Naive thymus-derived CD4-positive, alpha-beta T cell (primary cell): ENCODE measurements at regions of chr2 and their contacts with region 1.

Region 1: GRCh38 chr2:198438331-198438730 is 633.9 kb downstream of the PLCL1 start:
- DNase-seq: no peak
- ATAC-seq: no peak
- H3K4me3 ChIP-seq: no peak overlapping the region
- H3K4me3 Mint-ChIP-seq: no peak overlapping the region
- H3K27ac ChIP-seq: no peak overlapping the region
- H3K27ac Mint-ChIP-seq: no peak overlapping the region
- H3K4me1 ChIP-seq: no peaks in the 10 kb centered on the region
- H3K4me1 Mint-ChIP-seq: peaks cover 0 to 2% (median 0%) of the 10 kb centered on the region in 7 donors
- H3K27me3 ChIP-seq: peaks cover 0 to 6% of the 10 kb centered on the region in 2 donors
- H3K27me3 Mint-ChIP-seq: peaks cover 2 to 30% (median 11%) of the 10 kb centered on the region in 5 donors

Region 2: GRCh38 chr2:197255543-197255942 is 1182.8 kb before region 1 on chr2:
- CTCF ChIA-PET with region 1: no interaction called
- POLR2A ChIA-PET with region 1: no interaction called
- intact Hi-C with region 1: no loop called
- DNase-seq: peak in 7 of 9 donors; percentile 47 to 83 (median 56)
- ATAC-seq: peak; percentile 96
- H3K4me3 ChIP-seq: peak overlapping the region; percentile 38
- H3K4me3 Mint-ChIP-seq: peak overlapping the region; percentile 69 to 88 (median 77)
- H3K27ac ChIP-seq: peak overlapping the region; percentile 80
- H3K27ac Mint-ChIP-seq: peak overlapping the region; percentile 84 to 98 (median 94)
- H3K4me1 ChIP-seq: peaks cover 68 to 74% of the 10 kb centered on the region in 2 donors
- H3K4me1 Mint-ChIP-seq: peaks cover 58 to 98% (median 82%) of the 10 kb centered on the region in 7 donors
- H3K27me3 ChIP-seq: no peaks in the 10 kb centered on the region
- H3K27me3 Mint-ChIP-seq: no peaks in the 10 kb centered on the region

Region 3: GRCh38 chr2:198478361-198478760 is 40.0 kb after region 1 on chr2:
- CTCF ChIA-PET with region 1: no interaction called
- POLR2A ChIA-PET with region 1: no interaction called
- intact Hi-C with region 1: loop called in 1 of 2 experiments (anchors 1 kb)
- DNase-seq: no peak
- ATAC-seq: no peak
- H3K4me3 ChIP-seq: no peak overlapping the region
- H3K4me3 Mint-ChIP-seq: no peak overlapping the region
- H3K27ac ChIP-seq: no peak overlapping the region
- H3K27ac Mint-ChIP-seq: no peak overlapping the region
- H3K4me1 ChIP-seq: no peaks in the 10 kb centered on the region
- H3K4me1 Mint-ChIP-seq: no peaks in the 10 kb centered on the region
- H3K27me3 ChIP-seq: no peaks in the 10 kb centered on the region
- H3K27me3 Mint-ChIP-seq: peaks cover 0 to 10% (median 0%) of the 10 kb centered on the region in 5 donors

Region 4: GRCh38 chr2:198731842-198732399 is 293.6 kb after region 1 on chr2:
- CTCF ChIA-PET with region 1: no interaction called
- POLR2A ChIA-PET with region 1: no interaction called
- intact Hi-C with region 1: no loop called
- DNase-seq: no peak
- ATAC-seq: no peak
- H3K4me3 ChIP-seq: no peak overlapping the region
- H3K4me3 Mint-ChIP-seq: no peak overlapping the region
- H3K27ac ChIP-seq: no peak overlapping the region
- H3K27ac Mint-ChIP-seq: no peak overlapping the region
- H3K4me1 ChIP-seq: no peaks in the 10 kb centered on the region
- H3K4me1 Mint-ChIP-seq: no peaks in the 10 kb centered on the region
- H3K27me3 ChIP-seq: no peaks in the 10 kb centered on the region
- H3K27me3 Mint-ChIP-seq: peaks cover 0 to 13% (median 6%) of the 10 kb centered on the region in 5 donors